ENCODE measurements at regions of chr5 and their contacts with region 1.

Region 1: GRCh38 chr5:145825751-145826180 is 9.4 kb downstream of the PRELID2 start:
- DNase-seq: peak; percentile 56
- H3K4me3 ChIP-seq: no peak overlapping the region
- H3K27ac ChIP-seq: no peak overlapping the region
- H3K4me1 ChIP-seq: peaks cover 21% of the 10 kb centered on the region
- H3K27me3 ChIP-seq: no peaks in the 10 kb centered on the region
- CTCF ChIP-seq: peak; percentile 54 to 59
- POLR2A ChIP-seq: no peak

Region 2: GRCh38 chr5:145245354-145245753 is 580.4 kb before region 1 on chr5:
- CTCF ChIA-PET with region 1: interaction called, 3 read pairs
- POLR2A ChIA-PET with region 1: no interaction called
- dilution Hi-C with region 1: no loop called
- intact Hi-C with region 1: loop called (anchors 5 kb)
- DNase-seq: peak; percentile 57
- H3K4me3 ChIP-seq: peak overlapping the region in 1 of 3 experiments; percentile 16
- H3K27ac ChIP-seq: peak overlapping the region; percentile 91
- H3K4me1 ChIP-seq: peaks cover 28% of the 10 kb centered on the region
- H3K27me3 ChIP-seq: no peaks in the 10 kb centered on the region
- CTCF ChIP-seq: no peak
- POLR2A ChIP-seq: no peak

Region 3: DNA sequence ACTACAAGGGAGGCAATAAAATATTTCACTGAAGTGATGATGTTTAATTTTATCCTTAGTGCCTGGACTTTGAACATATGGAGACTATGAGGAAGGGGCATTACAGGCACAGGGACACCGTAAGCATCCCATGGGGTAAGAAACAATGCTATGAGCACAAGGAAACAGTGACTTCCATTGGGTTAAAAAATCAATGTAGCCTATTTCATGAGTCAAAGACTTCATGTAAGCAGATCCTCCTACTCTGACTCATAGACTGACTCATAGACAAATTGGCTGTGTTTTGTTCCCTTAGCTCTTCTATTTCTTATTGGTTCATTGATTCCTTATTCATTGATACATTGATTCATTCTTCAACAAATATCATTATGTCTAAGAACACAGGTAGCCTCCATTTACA is 341.6 kb before region 1 on chr5:
- CTCF ChIA-PET with region 1: no interaction called
- POLR2A ChIA-PET with region 1: no interaction called
- dilution Hi-C with region 1: no loop called
- intact Hi-C with region 1: loop called (anchors 10 kb)
- DNase-seq: peak; percentile 42
- H3K4me3 ChIP-seq: no peak overlapping the region
- H3K27ac ChIP-seq: no peak overlapping the region
- H3K4me1 ChIP-seq: peaks cover 18% of the 10 kb centered on the region
- H3K27me3 ChIP-seq: no peaks in the 10 kb centered on the region
- CTCF ChIP-seq: no peak
- POLR2A ChIP-seq: no peak

Region 4: DNA sequence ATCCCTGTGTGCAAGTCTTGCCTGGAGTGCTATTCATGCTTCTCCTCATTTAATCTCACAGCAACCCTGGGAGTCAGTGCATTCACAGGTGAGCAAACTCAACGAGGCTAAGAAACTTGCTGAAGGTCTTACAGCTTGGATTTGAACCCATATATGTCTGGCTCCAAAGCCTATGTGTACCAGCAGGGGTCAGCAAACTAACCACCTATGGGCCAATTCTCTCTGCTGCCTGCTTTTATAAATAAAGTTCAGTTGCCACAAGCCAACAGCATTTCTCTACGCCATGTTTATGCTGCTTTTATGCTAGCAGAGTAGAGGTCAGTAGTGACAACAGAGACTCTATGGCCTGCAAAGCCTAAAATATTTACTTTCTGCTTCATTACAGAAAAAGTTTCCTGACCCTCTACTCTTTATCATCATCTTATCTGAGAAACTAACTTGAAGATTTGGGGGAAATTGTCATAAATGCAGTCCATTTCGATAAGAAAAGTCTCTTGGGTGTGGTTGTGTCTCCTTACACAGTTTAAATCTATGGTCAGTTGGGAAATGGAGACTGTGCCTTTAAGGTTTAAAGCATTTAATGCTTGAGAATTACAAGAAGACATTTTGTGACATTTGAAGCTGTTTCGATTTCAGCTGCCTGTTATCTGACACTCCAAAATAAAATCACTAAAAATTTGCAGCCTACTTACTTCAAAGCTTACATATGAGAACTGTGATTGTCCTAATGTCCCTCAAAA is 128.3 kb before region 1 on chr5:
- CTCF ChIA-PET with region 1: interaction called, 70 read pairs
- POLR2A ChIA-PET with region 1: no interaction called
- dilution Hi-C with region 1: no loop called
- intact Hi-C with region 1: loop called (anchors 1 kb)
- DNase-seq: peak; percentile 68
- H3K4me3 ChIP-seq: no peak overlapping the region
- H3K27ac ChIP-seq: no peak overlapping the region
- H3K4me1 ChIP-seq: no peaks in the 10 kb centered on the region
- H3K27me3 ChIP-seq: no peaks in the 10 kb centered on the region
- CTCF ChIP-seq: peak; percentile 61 to 74
- POLR2A ChIP-seq: no peak

Region 5: DNA sequence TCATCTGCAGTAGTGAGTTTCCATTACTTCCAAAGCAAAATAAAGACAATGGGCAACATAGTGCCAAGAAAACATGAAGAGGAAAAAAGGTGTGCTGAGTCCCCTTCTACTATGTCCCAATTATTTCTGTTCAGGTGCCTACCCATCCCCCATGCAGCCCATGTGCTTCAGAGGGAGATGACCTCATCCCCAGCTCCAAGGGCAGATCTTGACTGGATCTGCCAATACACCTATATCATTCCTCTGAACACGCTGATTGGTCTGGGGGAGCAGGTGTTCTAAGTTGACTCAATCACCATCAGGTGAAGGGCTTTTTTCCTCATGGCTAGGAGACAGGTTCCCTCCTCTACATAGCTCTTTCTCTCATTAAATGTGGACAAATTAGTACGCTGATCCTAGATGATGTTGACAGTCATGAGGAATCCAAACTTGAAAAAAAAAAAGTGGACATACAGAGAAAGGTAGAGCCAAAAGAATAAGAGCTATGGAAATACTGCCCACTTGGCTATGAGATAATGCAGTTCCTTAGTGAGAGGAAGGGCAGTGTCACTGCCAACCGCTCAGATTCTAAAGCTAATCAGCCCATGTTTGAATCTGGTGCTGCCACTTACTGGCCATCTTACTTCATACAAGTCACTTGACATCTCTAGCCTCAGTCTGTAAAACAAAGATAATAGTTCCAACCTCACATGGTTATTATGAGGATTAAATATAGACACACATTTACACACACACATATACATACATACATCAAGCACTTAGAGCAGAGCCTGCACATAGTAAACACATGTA is 13.7 kb before region 1 on chr5:
- CTCF ChIA-PET with region 1: interaction called, 26 read pairs
- POLR2A ChIA-PET with region 1: no interaction called
- dilution Hi-C with region 1: no loop called
- intact Hi-C with region 1: no loop called
- DNase-seq: peak; percentile 69
- H3K4me3 ChIP-seq: no peak overlapping the region
- H3K27ac ChIP-seq: no peak overlapping the region
- H3K4me1 ChIP-seq: no peaks in the 10 kb centered on the region
- H3K27me3 ChIP-seq: no peaks in the 10 kb centered on the region
- CTCF ChIP-seq: peak; percentile 27 to 43
- POLR2A ChIP-seq: no peak

Measured in endothelial cell of umbilical vein (primary cell).